OCI-LY7 (cell line): ENCODE measurements at regions of chr3 and their contacts with region 1.

Region 1: DNA sequence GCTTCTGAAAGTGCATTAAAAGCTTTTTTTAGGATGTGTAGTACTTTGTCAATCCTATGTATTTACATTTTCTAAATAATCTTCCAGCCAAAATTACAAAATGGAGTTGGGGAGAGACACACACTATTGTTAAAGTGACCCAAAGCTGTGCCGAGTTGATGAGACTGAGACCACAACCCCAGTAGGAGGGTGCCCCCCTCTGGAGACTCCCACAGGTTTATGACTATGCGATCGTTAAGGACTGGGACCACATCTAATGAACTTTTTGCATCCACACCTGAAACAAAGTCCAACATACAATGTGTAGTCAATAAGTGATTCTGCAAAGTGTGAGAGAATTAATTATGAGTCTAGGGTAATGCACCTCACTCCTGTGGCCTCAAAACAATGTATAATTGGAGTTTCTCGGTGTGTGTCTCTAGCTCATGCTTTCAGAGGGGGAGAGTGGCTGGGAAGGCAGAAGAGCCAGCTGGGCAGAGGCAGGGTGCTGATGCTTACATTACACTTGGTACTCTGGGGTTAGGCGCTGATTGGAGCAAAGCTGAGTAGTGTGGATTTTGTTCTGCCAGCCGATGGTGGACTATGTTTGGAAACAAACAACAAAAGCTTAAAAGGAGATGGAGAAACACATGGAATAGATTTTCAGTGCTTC is 102.8 kb downstream of the KCNH8 start:
- DNase-seq: peak; percentile 24
- H3K4me3 ChIP-seq: no peak overlapping the region
- H3K27ac ChIP-seq: no peak overlapping the region
- H3K4me1 ChIP-seq: peaks cover 7% of the 10 kb centered on the region
- CTCF ChIP-seq: peak; percentile 69

Region 2: GRCh38 chr3:19065027-19065426 is 186.1 kb before region 1 on chr3:
- CTCF ChIA-PET with region 1: no interaction called
- POLR2A ChIA-PET with region 1: no interaction called
- intact Hi-C with region 1: loop called (anchors 10 kb)
- DNase-seq: peak; percentile 36
- H3K4me3 ChIP-seq: no peak overlapping the region
- H3K27ac ChIP-seq: no peak overlapping the region
- H3K4me1 ChIP-seq: no peaks in the 10 kb centered on the region
- CTCF ChIP-seq: peak; percentile 83